Activated B cell treated with CpG ODN at 0.5 μM for 24 hours (primary cell): ENCODE measurements at regions of chr6 and their contacts with region 1.

Region 1: DNA sequence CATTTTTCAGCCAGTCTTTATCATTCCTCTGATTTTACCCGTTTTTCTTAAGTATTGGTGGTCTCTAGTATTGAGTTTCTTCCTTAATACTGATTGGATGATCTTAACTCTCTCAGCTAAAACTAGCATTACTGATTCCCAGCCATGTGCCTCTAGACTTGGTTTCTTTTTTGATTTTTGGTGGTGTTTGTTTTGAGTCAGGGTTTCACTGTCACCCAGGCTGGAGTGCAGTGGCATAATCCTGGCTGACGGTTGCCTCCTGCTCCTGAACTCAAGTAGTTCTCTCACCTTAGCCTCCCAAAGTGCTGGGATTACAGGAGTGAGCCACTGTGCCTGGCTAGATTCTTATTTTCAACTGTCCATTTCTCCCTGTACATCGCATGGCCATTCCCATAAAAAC is 24.9 kb downstream of the DPPA5 start:
- DNase-seq: no peak
- ATAC-seq: no peak
- H3K4me3 Mint-ChIP-seq: no peak overlapping the region
- H3K27ac Mint-ChIP-seq: no peak overlapping the region
- H3K4me1 Mint-ChIP-seq: peaks cover 2% of the 10 kb centered on the region
- H3K27me3 Mint-ChIP-seq: peaks cover 26% of the 10 kb centered on the region
- CTCF ChIP-seq: no peak

Region 2: GRCh38 chr6:71383901-71384489 is 1945.2 kb before region 1 on chr6:
- CTCF ChIA-PET with region 1: no interaction called
- POLR2A ChIA-PET with region 1: no interaction called
- intact Hi-C with region 1: loop called (anchors 5 kb)
- DNase-seq: no peak
- ATAC-seq: no peak
- H3K4me3 Mint-ChIP-seq: no peak overlapping the region
- H3K27ac Mint-ChIP-seq: no peak overlapping the region
- H3K4me1 Mint-ChIP-seq: peaks cover 3% of the 10 kb centered on the region
- H3K27me3 Mint-ChIP-seq: no peaks in the 10 kb centered on the region
- CTCF ChIP-seq: no peak

Region 3: DNA sequence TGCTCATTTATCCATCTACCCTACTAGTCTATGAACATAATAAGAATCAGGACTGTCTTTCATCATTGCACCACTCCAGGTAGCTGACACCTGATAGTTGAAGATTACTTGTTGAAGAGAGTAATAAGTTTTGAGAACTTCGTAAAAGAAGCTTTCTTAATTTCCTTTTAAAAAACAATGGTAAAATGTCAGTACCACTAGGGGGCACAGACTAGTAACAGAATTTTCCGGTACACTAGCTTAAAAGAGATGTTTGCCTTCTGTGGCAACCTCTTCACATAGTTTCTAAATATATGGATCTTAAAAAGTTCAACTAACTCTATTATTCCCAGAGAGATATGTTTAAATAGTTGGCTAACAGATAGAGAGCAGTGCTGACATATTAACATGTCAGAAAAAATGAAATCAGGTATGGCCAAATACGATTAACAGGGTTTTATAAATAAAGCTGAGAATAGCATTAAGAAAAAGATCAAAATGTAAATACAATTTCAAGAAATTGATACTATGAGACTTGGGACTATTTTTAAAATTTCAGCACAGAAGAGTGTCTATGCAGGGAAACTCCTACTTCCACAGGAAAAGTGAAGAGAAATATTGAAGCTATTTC is 712.7 kb before region 1 on chr6:
- CTCF ChIA-PET with region 1: interaction called, 20 read pairs
- POLR2A ChIA-PET with region 1: no interaction called
- intact Hi-C with region 1: loop called (anchors 1 kb)
- DNase-seq: no peak
- ATAC-seq: no peak
- H3K4me3 Mint-ChIP-seq: no peak overlapping the region
- H3K27ac Mint-ChIP-seq: no peak overlapping the region
- H3K4me1 Mint-ChIP-seq: peaks cover 28% of the 10 kb centered on the region
- H3K27me3 Mint-ChIP-seq: no peaks in the 10 kb centered on the region
- CTCF ChIP-seq: no peak

Region 4: GRCh38 chr6:73240730-73241129 is 88.5 kb before region 1 on chr6:
- CTCF ChIA-PET with region 1: no interaction called
- POLR2A ChIA-PET with region 1: no interaction called
- intact Hi-C with region 1: no loop called
- DNase-seq: no peak
- ATAC-seq: no peak
- H3K4me3 Mint-ChIP-seq: no peak overlapping the region
- H3K27ac Mint-ChIP-seq: no peak overlapping the region
- H3K4me1 Mint-ChIP-seq: no peaks in the 10 kb centered on the region
- H3K27me3 Mint-ChIP-seq: peaks cover 4% of the 10 kb centered on the region
- CTCF ChIP-seq: no peak

Region 5: DNA sequence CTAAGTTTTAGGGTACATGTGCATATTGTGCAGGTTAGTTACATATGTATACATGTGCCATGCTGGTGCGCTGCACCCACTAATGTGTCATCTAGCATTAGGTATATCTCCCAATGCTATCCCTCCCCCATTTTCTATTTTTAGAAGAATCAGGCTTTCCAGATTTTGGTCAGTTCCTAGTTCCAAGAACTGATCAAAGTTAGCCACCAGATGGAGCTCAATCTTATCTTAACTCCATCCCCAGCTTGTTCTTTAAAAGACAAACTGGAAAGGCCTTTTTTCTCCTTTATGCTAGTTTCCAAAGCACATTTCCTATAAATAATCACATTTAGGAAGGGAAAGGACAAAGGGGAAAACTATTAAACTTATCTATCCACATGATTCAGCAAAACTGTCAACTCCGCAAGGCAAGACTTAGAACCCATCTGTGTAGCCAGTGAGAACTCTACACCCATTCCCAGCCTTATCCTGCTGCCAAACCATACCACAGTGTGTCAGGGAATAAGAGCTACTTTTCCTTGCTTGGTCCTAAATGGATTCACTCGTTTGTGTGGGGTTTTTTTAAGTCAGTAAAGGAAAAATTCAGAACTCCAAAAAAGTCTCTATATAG is 43.4 kb before region 1 on chr6:
- CTCF ChIA-PET with region 1: interaction called, 58 read pairs
- POLR2A ChIA-PET with region 1: no interaction called
- intact Hi-C with region 1: loop called (anchors 1 kb)
- DNase-seq: no peak
- ATAC-seq: no peak
- H3K4me3 Mint-ChIP-seq: no peak overlapping the region
- H3K27ac Mint-ChIP-seq: no peak overlapping the region
- H3K4me1 Mint-ChIP-seq: no peaks in the 10 kb centered on the region
- H3K27me3 Mint-ChIP-seq: no peaks in the 10 kb centered on the region
- CTCF ChIP-seq: no peak

Region 6: GRCh38 chr6:73435236-73435635 is 106.0 kb after region 1 on chr6:
- CTCF ChIA-PET with region 1: no interaction called
- POLR2A ChIA-PET with region 1: no interaction called
- intact Hi-C with region 1: no loop called
- DNase-seq: no peak
- ATAC-seq: no peak
- H3K4me3 Mint-ChIP-seq: no peak overlapping the region
- H3K27ac Mint-ChIP-seq: no peak overlapping the region
- H3K4me1 Mint-ChIP-seq: peaks cover 3% of the 10 kb centered on the region
- H3K27me3 Mint-ChIP-seq: no peaks in the 10 kb centered on the region
- CTCF ChIP-seq: no peak

Region 7: DNA sequence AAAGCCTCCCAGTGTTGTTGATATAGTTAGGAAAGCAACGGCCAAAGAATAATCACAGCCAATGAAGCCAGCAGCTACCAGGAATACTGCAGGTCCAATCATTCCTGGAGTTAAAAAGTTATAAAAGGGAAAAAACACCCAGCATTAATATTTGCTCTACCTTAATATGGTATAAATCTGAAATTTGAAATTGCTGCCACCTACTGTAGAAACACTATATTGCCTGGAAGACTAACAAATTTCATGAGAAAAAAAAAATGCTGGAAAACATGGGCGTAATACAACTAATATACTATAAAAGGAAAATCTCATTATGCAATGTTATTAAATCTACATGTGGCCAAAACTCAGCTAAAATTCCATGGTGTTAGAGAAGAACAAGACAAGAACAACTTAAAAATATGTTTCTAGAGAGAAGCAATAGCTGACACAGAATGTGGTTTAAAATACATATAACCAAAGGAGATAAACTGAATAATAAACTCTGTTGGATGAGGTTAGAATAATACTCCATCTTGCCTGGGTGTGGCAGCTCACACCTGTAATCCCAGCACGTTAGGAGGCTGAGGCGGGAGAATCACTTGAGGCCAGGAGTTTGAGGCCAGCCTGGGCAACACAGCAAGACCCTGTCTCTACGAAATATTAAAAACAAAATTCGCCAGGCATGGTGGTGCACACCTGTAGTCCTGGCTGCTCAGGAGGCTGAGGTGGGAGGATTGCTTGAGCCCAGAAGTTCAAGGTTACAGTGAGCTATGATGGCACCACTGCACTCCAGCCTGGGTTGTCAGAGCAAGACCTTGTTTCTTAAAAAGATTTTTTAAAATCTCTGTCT is 281.5 kb after region 1 on chr6:
- CTCF ChIA-PET with region 1: no interaction called
- POLR2A ChIA-PET with region 1: no interaction called
- intact Hi-C with region 1: loop called (anchors 5 kb)
- DNase-seq: no peak
- ATAC-seq: peak; percentile 67
- H3K4me3 Mint-ChIP-seq: no peak overlapping the region
- H3K27ac Mint-ChIP-seq: no peak overlapping the region
- H3K4me1 Mint-ChIP-seq: peaks cover 5% of the 10 kb centered on the region
- H3K27me3 Mint-ChIP-seq: no peaks in the 10 kb centered on the region
- CTCF ChIP-seq: no peak